ENCODE measurements at regions of chr5 and their contacts with region 1.

Region 1: GRCh38 chr5:80255732-80256479 is at the start of gene SERINC5:
- DNase-seq: peak; percentile 75
- ATAC-seq: peak; percentile 84
- H3K4me3 Mint-ChIP-seq: peak within 1 kb of the TSS; percentile 96
- H3K27ac Mint-ChIP-seq: peak within 1 kb of the TSS; percentile 95
- H3K4me1 Mint-ChIP-seq: peaks cover 29% of the 10 kb centered on the region
- H3K27me3 Mint-ChIP-seq: no peaks in the 10 kb centered on the region
- CTCF ChIP-seq: no peak
- total RNA-seq, gene SERINC5: 4.4 and 5.3 TPM in 2 replicates

Region 2: GRCh38 chr5:79235634-79236363 is 1020.1 kb before region 1 on chr5 and contains the start of gene JMY:
- CTCF ChIA-PET with region 1: no interaction called
- POLR2A ChIA-PET with region 1: interaction called, 6 read pairs
- intact Hi-C with region 1: loop called (anchors 5 kb)
- DNase-seq: peak; percentile 68
- ATAC-seq: peak; percentile 79
- H3K4me3 Mint-ChIP-seq: peak within 1 kb of the TSS; percentile 91
- H3K27ac Mint-ChIP-seq: peak within 1 kb of the TSS; percentile 94
- H3K4me1 Mint-ChIP-seq: peaks cover 34% of the 10 kb centered on the region
- H3K27me3 Mint-ChIP-seq: no peaks in the 10 kb centered on the region
- CTCF ChIP-seq: no peak
- total RNA-seq, gene JMY: 6.4 and 6.9 TPM in 2 replicates

Region 3: DNA sequence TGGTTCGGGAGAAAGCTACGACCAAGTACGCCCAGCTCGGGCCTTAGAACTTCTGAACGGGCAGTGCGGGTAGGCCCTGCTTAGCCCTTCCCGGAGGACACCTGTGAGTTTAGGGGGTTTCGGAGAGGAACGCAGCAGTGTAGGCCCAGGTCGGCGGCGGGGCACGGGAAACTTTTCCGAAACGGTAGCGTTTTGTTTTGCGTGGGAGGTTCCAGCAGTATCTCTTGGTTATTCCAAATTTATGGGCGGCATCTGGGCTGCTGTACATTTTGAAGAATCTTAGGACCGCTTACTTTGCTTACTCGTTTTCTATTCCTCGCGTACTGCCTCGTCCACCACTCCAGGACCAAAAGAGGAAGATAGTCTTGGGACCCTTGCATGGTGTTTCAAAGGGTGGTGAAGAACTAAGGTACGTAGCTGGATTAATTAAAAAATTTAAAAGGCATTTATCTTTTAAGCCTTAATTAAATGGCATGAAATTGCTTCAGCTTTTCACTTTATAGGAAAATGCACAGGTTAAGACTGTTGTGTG is 643.2 kb before region 1 on chr5:
- CTCF ChIA-PET with region 1: no interaction called
- POLR2A ChIA-PET with region 1: interaction called, 9 read pairs
- intact Hi-C with region 1: loop called (anchors 5 kb)
- DNase-seq: no peak
- ATAC-seq: peak; percentile 16
- H3K4me3 Mint-ChIP-seq: peak overlapping the region; percentile 99
- H3K27ac Mint-ChIP-seq: peak overlapping the region; percentile 98
- H3K4me1 Mint-ChIP-seq: peaks cover 34% of the 10 kb centered on the region
- H3K27me3 Mint-ChIP-seq: peaks cover 2% of the 10 kb centered on the region
- CTCF ChIP-seq: no peak

Region 4: GRCh38 chr5:80125962-80126480 is 129.9 kb before region 1 on chr5:
- CTCF ChIA-PET with region 1: no interaction called
- POLR2A ChIA-PET with region 1: interaction called, 32 read pairs
- intact Hi-C with region 1: loop called (anchors 5 kb)
- DNase-seq: no peak
- ATAC-seq: peak; percentile 78
- H3K4me3 Mint-ChIP-seq: peak overlapping the region; percentile 64
- H3K27ac Mint-ChIP-seq: peak overlapping the region; percentile 82
- H3K4me1 Mint-ChIP-seq: peaks cover 30% of the 10 kb centered on the region
- H3K27me3 Mint-ChIP-seq: no peaks in the 10 kb centered on the region
- CTCF ChIP-seq: no peak

Region 5: DNA sequence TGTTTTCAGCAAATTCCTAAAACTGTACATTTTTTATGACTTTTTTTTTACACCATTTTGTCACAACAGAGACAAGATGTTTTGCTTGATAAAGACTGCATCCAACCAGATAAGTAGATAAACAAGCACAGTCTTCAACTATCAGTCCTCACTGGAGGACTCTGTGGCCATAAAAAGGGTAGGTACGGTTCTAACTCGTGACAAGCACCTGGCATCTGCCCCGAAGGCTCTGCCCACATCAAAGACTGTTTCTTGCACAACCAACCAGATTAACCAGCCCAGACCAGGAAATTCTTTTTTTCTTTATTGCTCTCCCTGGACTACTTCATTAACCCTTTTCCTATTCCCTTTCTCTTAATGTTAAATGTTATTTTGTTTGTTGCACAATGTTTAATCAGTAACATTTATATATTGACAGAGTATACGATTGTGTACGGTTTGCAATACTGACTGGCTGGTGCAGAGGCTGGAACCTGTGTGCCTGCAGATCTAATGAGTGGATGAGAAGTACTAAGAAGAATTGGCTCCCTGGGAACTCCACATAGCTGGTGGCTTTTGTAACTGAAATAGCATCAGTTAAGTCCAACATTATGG is 74.2 kb before region 1 on chr5:
- CTCF ChIA-PET with region 1: no interaction called
- POLR2A ChIA-PET with region 1: interaction called, 5 read pairs
- intact Hi-C with region 1: loop called (anchors 10 kb)
- DNase-seq: no peak
- ATAC-seq: no peak
- H3K4me3 Mint-ChIP-seq: no peak overlapping the region
- H3K27ac Mint-ChIP-seq: no peak overlapping the region
- H3K4me1 Mint-ChIP-seq: peaks cover 56% of the 10 kb centered on the region
- H3K27me3 Mint-ChIP-seq: no peaks in the 10 kb centered on the region
- CTCF ChIP-seq: no peak

Region 6: GRCh38 chr5:80266566-80266965 is 10.7 kb after region 1 on chr5:
- CTCF ChIA-PET with region 1: interaction called, 3 read pairs
- POLR2A ChIA-PET with region 1: interaction called, 12 read pairs
- intact Hi-C with region 1: no loop called
- DNase-seq: no peak
- ATAC-seq: no peak
- H3K4me3 Mint-ChIP-seq: no peak overlapping the region
- H3K27ac Mint-ChIP-seq: no peak overlapping the region
- H3K4me1 Mint-ChIP-seq: peaks cover 10% of the 10 kb centered on the region
- H3K27me3 Mint-ChIP-seq: no peaks in the 10 kb centered on the region
- CTCF ChIP-seq: no peak

Region 7: GRCh38 chr5:80487829-80488721 is 232.2 kb after region 1 on chr5 and contains the start of gene FAM151B:
- CTCF ChIA-PET with region 1: no interaction called
- POLR2A ChIA-PET with region 1: no interaction called
- intact Hi-C with region 1: loop called (anchors 5 kb)
- DNase-seq: peak; percentile 60
- ATAC-seq: peak; percentile 87
- H3K4me3 Mint-ChIP-seq: peak within 1 kb of the TSS; percentile 78
- H3K27ac Mint-ChIP-seq: no peak within 1 kb of the TSS
- H3K4me1 Mint-ChIP-seq: peaks cover 19% of the 10 kb centered on the region
- H3K27me3 Mint-ChIP-seq: peaks cover 37% of the 10 kb centered on the region
- CTCF ChIP-seq: no peak
- total RNA-seq, gene FAM151B: 0.47 TPM in 1 of 2 replicates, not detected in the other

Measured in activated B cell treated with CpG ODN at 0.5 μM for 24 hours (primary cell).